CD8-positive, alpha-beta memory T cell (primary cell): ENCODE measurements at regions of chr2 and their contacts with region 1.

Region 1: DNA sequence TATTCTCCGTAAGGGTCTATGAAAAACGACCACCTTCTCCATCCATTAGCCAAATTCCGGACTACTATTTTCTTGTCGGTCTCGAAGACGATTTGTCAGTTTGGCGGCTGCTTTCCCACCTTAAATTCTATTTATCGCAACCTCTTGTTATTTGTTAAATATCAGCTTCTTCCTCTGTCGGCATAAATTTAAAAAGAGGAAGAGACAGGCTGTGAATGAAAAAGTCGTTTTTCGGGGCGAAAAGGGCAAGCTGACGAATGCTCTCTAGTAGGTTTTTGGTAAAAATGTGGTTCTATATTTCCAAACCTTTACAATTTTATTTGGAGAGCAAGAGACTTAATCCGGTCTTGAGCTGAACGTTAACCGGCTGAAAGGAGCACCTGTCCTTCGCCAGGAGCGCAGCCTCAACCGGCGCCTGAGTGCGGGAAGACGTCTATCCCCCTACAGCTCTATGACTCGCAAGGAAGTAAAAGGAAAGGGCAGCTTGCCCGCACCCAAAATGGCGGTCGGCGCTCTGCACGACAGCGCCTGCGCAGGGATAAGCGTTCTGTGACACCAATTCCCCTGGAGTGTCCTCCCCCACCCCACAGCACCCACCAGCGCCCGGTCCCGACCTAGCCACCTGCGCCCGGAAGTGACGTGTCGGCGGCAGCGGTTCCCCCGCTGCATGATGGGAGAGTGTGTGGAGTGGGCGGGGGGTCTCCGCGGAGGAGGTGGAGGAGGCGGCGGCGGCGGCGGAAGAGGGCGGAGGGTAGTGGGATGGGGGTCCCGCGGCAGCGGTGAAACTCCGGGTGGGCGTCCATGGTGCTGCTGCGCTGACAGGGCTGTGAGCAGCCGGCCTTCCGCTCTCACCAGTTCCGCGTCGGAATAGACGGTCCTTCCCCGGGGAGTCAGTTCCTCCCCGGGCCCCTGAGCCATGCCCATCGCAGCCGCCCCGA is at the start of gene AFTPH:
- DNase-seq: peak; percentile 99 to 100 (median 100)
- H3K4me3 ChIP-seq: peak within 1 kb of the TSS; percentile 79
- H3K4me3 Mint-ChIP-seq: peak within 1 kb of the TSS; percentile 89 to 100 (median 98)
- H3K27ac ChIP-seq: peak within 1 kb of the TSS; percentile 77
- H3K27ac Mint-ChIP-seq: peak within 1 kb of the TSS; percentile 84 to 100 (median 98)
- H3K4me1 ChIP-seq: peaks cover 30% of the 10 kb centered on the region
- H3K4me1 Mint-ChIP-seq: peaks cover 41 to 48% (median 46%) of the 10 kb centered on the region in 3 donors
- H3K27me3 ChIP-seq: no peaks in the 10 kb centered on the region
- H3K27me3 Mint-ChIP-seq: peaks cover 3% of the 10 kb centered on the region in 2 donors
- total RNA-seq, gene AFTPH: 41.4 to 44.2 TPM

Region 2: GRCh38 chr2:64562148-64562784 is 38.3 kb after region 1 on chr2:
- CTCF ChIA-PET with region 1: interaction called, 45 read pairs
- POLR2A ChIA-PET with region 1: interaction called, 3 read pairs
- DNase-seq: peak in 2 of 5 donors; percentile 32 to 44
- H3K4me3 ChIP-seq: no peak overlapping the region
- H3K4me3 Mint-ChIP-seq: no peak overlapping the region
- H3K27ac ChIP-seq: no peak overlapping the region
- H3K27ac Mint-ChIP-seq: no peak overlapping the region
- H3K4me1 ChIP-seq: peaks cover 21% of the 10 kb centered on the region
- H3K4me1 Mint-ChIP-seq: peaks cover 31 to 37% (median 35%) of the 10 kb centered on the region in 3 donors
- H3K27me3 ChIP-seq: no peaks in the 10 kb centered on the region
- H3K27me3 Mint-ChIP-seq: no peaks in the 10 kb centered on the region

Region 3: DNA sequence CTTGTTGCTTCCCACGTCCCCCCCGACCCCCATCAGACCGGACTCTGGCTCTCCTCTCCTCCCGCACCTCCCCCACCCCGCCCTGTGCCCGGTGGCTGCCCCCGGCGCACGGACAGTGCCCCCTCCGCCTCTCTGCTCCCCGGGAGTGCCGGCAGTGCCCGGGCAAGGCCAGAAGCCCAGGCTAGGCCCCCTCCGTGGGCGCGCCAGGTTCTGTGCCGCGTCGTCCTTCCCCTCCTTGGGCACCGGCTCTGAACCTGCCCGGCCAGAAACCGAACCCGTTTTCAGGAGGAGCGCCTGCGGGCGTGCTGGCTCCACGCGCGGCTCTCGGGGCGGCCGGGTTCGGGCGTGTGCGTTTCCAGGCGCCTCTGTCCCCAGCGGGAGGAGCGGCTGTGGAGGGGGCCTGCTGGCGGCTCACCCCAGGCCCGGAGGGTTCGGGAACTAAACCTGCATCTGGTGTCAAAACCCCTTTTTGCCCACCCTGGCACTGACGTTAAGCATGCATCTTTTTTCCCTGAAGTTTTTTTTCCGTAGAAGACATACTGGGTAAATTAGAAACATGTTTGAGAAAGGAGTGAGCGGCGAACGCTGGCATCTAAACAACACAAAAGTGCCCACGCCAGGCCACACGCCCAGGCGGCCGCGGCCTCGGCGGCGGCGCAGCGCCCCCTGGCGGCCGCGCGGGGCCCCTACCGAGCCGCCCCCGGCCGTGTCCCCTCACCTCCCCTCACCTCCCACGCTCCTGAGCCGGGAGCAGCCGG is 341.3 kb after region 1 on chr2:
- CTCF ChIA-PET with region 1: interaction called, 14 read pairs
- POLR2A ChIA-PET with region 1: no interaction called
- DNase-seq: peak; percentile 48 to 74 (median 70)
- H3K4me3 ChIP-seq: peak overlapping the region; percentile 63
- H3K4me3 Mint-ChIP-seq: peak overlapping the region in 5 of 7 donors; percentile 74 to 91 (median 79)
- H3K27ac ChIP-seq: no peak overlapping the region
- H3K27ac Mint-ChIP-seq: peak overlapping the region in 3 of 8 donors; percentile 71 to 80 (median 74)
- H3K4me1 ChIP-seq: peaks cover 8% of the 10 kb centered on the region
- H3K4me1 Mint-ChIP-seq: peaks cover 0 to 4% (median 0%) of the 10 kb centered on the region in 3 donors
- H3K27me3 ChIP-seq: no peaks in the 10 kb centered on the region
- H3K27me3 Mint-ChIP-seq: peaks cover 7% of the 10 kb centered on the region in 2 donors

Region 4: DNA sequence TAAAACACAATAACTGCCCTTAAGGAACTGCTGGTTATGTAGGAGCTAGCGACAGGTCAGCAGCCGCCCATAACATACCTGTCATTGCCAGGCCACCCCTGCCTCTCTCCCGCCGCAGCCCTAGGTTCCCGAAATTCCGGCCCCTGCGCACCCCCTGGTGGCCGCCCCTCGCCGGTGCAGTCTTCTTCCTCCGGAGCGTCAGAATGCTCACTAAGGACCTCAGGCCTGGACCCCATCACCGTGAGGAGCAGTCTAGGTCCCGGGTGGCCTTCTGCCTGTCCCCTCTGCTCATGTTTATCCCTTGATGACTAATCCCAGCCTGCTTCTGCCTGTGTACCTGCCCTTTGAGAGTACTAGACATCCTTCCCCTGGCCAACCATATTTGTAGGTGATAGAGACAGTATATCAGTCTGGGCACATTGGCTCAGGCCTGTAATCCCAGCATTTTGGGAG is 349.6 kb after region 1 on chr2:
- CTCF ChIA-PET with region 1: interaction called, 27 read pairs
- POLR2A ChIA-PET with region 1: no interaction called
- DNase-seq: peak; percentile 63 to 79 (median 69)
- H3K4me3 ChIP-seq: no peak overlapping the region
- H3K4me3 Mint-ChIP-seq: peak overlapping the region in 3 of 7 donors; percentile 57 to 75 (median 61)
- H3K27ac ChIP-seq: no peak overlapping the region
- H3K27ac Mint-ChIP-seq: peak overlapping the region in 3 of 8 donors; percentile 1 to 83 (median 60)
- H3K4me1 ChIP-seq: peaks cover 7% of the 10 kb centered on the region
- H3K4me1 Mint-ChIP-seq: peaks cover 6 to 8% (median 7%) of the 10 kb centered on the region in 3 donors
- H3K27me3 ChIP-seq: no peaks in the 10 kb centered on the region
- H3K27me3 Mint-ChIP-seq: peaks cover 6% of the 10 kb centered on the region in 2 donors